HEK293 (cell line): ENCODE measurements at regions of chr17 and their contacts with region 1.

Region 1: DNA sequence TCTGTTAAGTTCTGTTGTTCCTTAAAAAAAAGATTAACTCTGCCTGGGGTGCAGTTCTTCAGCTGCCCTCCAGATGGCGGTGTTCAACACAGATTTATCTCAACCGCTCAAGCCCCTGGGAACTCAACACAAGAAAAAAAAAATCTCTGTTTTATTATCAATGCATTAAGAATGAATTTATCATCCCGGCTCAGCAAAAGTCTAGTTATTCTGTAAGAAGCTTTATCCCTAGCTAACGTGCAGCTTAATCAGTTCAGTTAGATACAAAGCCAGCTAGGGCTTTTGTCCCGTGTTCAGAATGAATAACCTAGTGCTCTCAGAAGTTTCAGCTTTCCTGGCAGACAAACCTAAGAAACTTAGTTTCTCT is 475.9 kb upstream of the CCL2 start:
- H3K4me3 ChIP-seq: no peak overlapping the region
- H3K27ac ChIP-seq: no peak overlapping the region
- H3K4me1 ChIP-seq: no peaks in the 10 kb centered on the region
- CTCF ChIP-seq: 0 out of 2 replicates have a peak, but pooled peaks have one; percentile 23

Region 2: DNA sequence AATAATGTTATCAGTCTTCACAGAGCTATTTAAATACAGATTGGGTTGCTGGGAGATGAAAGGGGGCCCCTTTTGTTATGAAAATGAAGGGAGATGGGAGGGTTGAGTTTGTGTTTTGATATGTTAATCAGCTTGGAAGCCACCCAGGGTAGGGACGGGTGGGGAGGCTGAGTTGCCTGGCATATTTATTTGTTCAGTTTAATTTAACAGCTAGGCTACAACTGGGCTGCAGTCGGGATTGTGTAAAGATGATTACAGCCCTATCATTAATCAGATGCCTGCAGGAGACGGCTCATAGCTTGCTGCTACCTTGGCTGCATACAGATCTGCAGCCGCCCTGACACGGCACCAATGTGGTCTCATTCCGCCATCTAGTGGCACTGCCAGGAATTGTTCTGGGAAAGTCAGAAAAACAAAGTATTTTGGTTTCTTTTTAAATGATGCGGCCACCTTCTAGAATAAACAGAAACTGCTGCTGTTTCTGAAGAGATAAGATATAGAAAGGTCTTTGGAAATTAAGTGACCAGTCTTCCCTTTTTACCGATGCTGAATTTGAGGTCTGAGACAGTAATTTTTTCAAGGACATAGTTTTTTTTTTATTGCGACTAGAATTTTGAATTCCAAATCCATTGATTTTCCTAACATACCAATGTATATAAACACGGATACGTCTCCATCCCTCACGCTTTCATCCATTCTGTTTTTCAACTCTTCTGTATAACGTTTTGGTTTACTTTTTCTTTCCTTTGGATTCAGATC is 28.1 kb before region 1 on chr17:
- CTCF ChIA-PET with region 1: interaction called, 12 read pairs
- POLR2A ChIA-PET with region 1: no interaction called
- H3K4me3 ChIP-seq: no peak overlapping the region
- H3K27ac ChIP-seq: no peak overlapping the region
- H3K4me1 ChIP-seq: peaks cover 8% of the 10 kb centered on the region; the same call in 1 of the 2 replicates
- CTCF ChIP-seq: peak; percentile 59

Region 3: DNA sequence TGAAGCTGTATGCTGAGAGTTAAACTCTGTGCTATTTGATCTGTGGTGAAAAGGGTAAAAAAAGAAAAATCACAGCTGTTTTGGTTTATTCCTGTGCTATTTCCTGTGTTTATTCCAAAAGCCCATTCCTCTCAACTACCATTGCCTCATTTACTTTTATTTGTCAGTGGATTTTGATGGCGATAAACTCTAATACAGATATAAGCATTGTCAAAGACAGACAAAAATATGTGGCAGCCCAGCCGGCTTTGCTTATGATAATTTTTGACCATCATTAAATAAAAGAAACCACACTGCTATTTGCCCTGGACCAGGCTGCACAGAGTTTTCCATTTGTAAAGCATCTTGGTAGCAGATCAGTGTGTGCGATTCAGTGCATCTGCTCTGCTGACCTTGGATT is 12.5 kb before region 1 on chr17:
- CTCF ChIA-PET with region 1: interaction called, 12 read pairs
- POLR2A ChIA-PET with region 1: no interaction called
- H3K4me3 ChIP-seq: no peak overlapping the region
- H3K27ac ChIP-seq: no peak overlapping the region
- H3K4me1 ChIP-seq: no peaks in the 10 kb centered on the region
- CTCF ChIP-seq: no peak

Region 4: GRCh38 chr17:33949100-33949499 is 169.9 kb after region 1 on chr17:
- CTCF ChIA-PET with region 1: interaction called, 24 read pairs
- POLR2A ChIA-PET with region 1: no interaction called
- H3K4me3 ChIP-seq: no peak overlapping the region
- H3K27ac ChIP-seq: no peak overlapping the region
- H3K4me1 ChIP-seq: peaks cover 3% of the 10 kb centered on the region; the same call in 1 of the 2 replicates
- CTCF ChIP-seq: no peak